ENCODE measurements at regions of chr18 and their contacts with region 1.

Region 1: DNA sequence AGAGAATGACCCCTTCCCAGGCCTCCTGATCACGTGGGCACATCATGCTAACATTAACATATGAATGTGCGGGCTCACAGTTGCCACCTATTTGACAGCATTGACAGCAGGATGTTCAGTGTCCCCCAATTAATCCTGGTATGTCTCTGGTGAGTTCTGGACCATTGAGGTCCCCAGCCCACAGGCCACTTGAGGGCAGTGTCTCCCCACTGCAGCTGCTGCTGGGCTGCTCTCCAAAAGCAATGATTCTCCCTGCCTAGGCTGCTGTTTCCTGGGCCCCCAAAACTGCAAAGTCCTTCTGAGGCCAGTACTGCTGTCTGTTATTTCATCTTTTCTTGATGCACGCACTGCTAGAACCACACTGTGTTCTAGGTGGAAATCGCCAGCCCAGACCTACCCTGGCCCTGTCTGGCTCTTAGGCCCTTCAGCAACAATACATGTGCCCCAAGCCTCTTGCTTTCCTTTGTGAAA is 52.7 kb upstream of the MAPK4 start:
- DNase-seq: peak; percentile 31
- H3K4me3 ChIP-seq: no peak overlapping the region
- H3K27ac ChIP-seq: no peak overlapping the region
- H3K4me1 ChIP-seq: no peaks in the 10 kb centered on the region
- H3K27me3 ChIP-seq: no peaks in the 10 kb centered on the region
- CTCF ChIP-seq: peak; percentile 78

Region 2: GRCh38 chr18:50429207-50429948 is 77.8 kb before region 1 on chr18:
- intact Hi-C with region 1: no loop called
- DNase-seq: no peak
- H3K4me3 ChIP-seq: no peak overlapping the region
- H3K27ac ChIP-seq: no peak overlapping the region
- H3K4me1 ChIP-seq: no peaks in the 10 kb centered on the region
- H3K27me3 ChIP-seq: no peaks in the 10 kb centered on the region
- CTCF ChIP-seq: peak; percentile 58

Region 3: DNA sequence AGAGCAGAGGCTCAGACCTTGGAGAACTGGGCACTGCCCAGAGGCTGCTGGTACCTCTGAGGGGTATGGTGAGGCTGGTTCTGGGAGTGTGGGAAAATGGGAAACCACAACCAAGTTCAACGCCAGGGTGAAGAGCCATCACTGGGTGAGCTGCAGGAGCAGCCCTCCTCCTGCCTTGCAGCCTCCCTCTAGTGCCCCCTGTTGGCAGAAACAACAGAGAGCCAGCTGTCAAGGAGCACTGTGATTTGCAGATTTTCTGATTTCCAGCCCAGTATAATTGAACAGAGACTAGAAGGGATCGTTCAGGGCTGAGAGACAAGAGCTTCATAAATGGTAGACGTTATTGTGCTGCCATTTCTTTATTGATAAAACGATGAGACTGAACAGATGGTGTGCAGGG is 103.2 kb after region 1 on chr18:
- intact Hi-C with region 1: no loop called
- DNase-seq: no peak
- H3K4me3 ChIP-seq: no peak overlapping the region
- H3K27ac ChIP-seq: no peak overlapping the region
- H3K4me1 ChIP-seq: peaks cover 33% of the 10 kb centered on the region
- H3K27me3 ChIP-seq: no peaks in the 10 kb centered on the region
- CTCF ChIP-seq: no peak

Region 4: GRCh38 chr18:50780144-50780543 is 273.0 kb after region 1 on chr18:
- intact Hi-C with region 1: loop called (anchors 5 kb)
- DNase-seq: no peak
- H3K4me3 ChIP-seq: no peak overlapping the region
- H3K27ac ChIP-seq: no peak overlapping the region
- H3K4me1 ChIP-seq: no peaks in the 10 kb centered on the region
- H3K27me3 ChIP-seq: peaks cover 3% of the 10 kb centered on the region
- CTCF ChIP-seq: no peak